Endothelial cell of umbilical vein (primary cell): ENCODE measurements at regions of chr4 and their contacts with region 1.

Region 1: GRCh38 chr4:77007358-77008191 is 58.0 kb downstream of the SEPTIN11 start:
- DNase-seq: peak; percentile 95
- H3K4me3 ChIP-seq: peak overlapping the region in 1 of 3 experiments; percentile 28
- H3K27ac ChIP-seq: peak overlapping the region; percentile 100
- H3K4me1 ChIP-seq: peaks cover 91% of the 10 kb centered on the region
- H3K27me3 ChIP-seq: no peaks in the 10 kb centered on the region
- CTCF ChIP-seq: no peak
- POLR2A ChIP-seq: peak; percentile 54

Region 2: DNA sequence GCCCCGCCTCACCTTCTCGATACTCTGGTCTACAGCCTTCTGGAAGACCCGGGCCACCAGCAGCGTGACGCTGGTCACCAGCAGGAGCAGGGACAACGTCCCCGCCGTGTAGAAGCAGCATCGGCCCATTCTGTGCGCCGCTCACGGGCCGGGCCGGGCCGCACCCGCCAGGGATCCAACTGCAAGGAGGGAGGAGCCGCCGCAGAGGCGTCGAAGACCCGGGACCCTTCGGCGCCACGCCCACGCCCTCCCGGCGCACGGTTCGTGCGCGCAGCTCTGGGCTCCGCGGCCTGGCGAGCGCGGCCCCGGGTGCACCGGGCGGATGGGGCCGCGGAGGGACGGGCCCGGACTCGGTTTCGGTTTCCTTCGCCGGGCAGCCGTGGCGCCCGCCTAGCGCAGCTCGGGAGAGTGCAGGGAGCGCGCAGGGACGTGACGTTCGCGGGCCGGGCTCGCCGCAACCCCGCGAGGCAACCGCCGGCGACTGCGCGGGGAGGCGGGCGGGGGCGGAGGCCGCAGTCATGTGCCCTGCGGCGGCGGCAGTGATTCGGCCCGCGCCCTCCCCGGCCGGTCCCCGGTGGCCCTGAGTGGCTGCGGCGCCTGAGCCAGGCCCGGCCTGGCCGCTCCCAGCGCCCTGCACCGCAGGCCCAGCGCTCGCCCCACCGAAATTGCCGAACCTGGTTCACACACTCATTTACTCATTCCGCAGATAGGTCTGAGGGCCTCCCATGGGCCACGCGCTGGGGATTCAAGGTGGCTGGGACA is 794.0 kb before region 1 on chr4 and contains the start of gene SCARB2:
- CTCF ChIA-PET with region 1: no interaction called
- POLR2A ChIA-PET with region 1: no interaction called
- dilution Hi-C with region 1: no loop called
- intact Hi-C with region 1: loop called (anchors 5 kb)
- DNase-seq: peak; percentile 90
- H3K4me3 ChIP-seq: peak within 1 kb of the TSS; percentile 37 to 94 (median 85)
- H3K27ac ChIP-seq: peak within 1 kb of the TSS; percentile 57
- H3K4me1 ChIP-seq: peaks cover 36% of the 10 kb centered on the region
- H3K27me3 ChIP-seq: no peaks in the 10 kb centered on the region
- CTCF ChIP-seq: no peak
- POLR2A ChIP-seq: peak; percentile 93
- total RNA-seq, gene SCARB2: 116 and 122 TPM in 2 replicates

Region 3: DNA sequence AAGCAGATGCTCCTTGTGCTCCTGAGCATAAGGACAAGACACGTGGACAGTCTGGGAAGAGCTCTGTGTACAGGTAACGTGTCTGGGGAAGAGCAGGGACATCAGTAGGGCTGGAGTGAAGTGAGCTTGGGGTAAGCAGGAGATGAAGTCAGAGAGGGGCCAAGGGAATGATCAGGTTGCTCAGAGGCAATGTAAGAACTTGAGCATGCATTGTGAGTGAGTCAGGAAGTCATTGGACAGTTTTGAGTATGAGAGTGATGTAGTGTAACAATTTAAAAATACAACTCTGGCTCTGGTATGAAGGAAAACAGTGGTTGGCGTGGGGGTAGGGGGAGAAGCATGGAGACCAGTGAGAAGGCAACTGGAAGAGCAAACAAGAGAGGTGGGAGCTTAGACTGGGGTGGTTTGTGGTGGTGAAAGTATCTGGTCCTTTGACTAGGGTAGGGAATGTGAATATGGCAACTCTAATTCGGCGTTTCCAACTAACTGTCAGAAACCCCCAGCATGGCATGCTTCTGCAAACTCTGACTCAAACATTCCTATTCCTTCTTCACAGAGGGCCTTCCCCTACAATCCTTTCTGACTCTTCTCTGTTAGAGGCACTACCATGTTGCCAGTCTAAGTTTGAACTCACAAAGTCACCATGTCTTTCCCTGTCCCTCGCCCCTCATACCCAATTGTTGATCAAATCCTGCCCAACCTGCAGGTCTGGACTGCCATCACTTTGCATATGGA is 643.9 kb before region 1 on chr4:
- CTCF ChIA-PET with region 1: no interaction called
- POLR2A ChIA-PET with region 1: no interaction called
- dilution Hi-C with region 1: no loop called
- intact Hi-C with region 1: no loop called
- DNase-seq: no peak
- H3K4me3 ChIP-seq: no peak overlapping the region
- H3K27ac ChIP-seq: no peak overlapping the region
- H3K4me1 ChIP-seq: no peaks in the 10 kb centered on the region
- H3K27me3 ChIP-seq: peaks cover 26 to 29% of the 10 kb centered on the region in 2 experiments
- CTCF ChIP-seq: no peak
- POLR2A ChIP-seq: no peak

Region 4: GRCh38 chr4:76748649-76749048 is 258.9 kb before region 1 on chr4:
- CTCF ChIA-PET with region 1: no interaction called
- POLR2A ChIA-PET with region 1: no interaction called
- dilution Hi-C with region 1: no loop called
- intact Hi-C with region 1: loop called (anchors 1 kb)
- DNase-seq: peak; percentile 57
- H3K4me3 ChIP-seq: no peak overlapping the region
- H3K27ac ChIP-seq: no peak overlapping the region
- H3K4me1 ChIP-seq: peaks cover 24% of the 10 kb centered on the region
- H3K27me3 ChIP-seq: no peaks in the 10 kb centered on the region
- CTCF ChIP-seq: peak; percentile 28 to 35
- POLR2A ChIP-seq: no peak

Region 5: GRCh38 chr4:76984127-76984526 is 23.4 kb before region 1 on chr4:
- CTCF ChIA-PET with region 1: interaction called, 5 read pairs
- POLR2A ChIA-PET with region 1: no interaction called
- dilution Hi-C with region 1: no loop called
- intact Hi-C with region 1: loop called (anchors 1 kb)
- DNase-seq: peak; percentile 84
- H3K4me3 ChIP-seq: peak overlapping the region in 1 of 3 experiments; percentile 1
- H3K27ac ChIP-seq: peak overlapping the region; percentile 65
- H3K4me1 ChIP-seq: peaks cover 41% of the 10 kb centered on the region
- H3K27me3 ChIP-seq: no peaks in the 10 kb centered on the region
- CTCF ChIP-seq: peak; percentile 46 to 51
- POLR2A ChIP-seq: no peak

Region 6: GRCh38 chr4:77044461-77045150 is 37.0 kb after region 1 on chr4:
- CTCF ChIA-PET with region 1: interaction called, 8 read pairs
- POLR2A ChIA-PET with region 1: no interaction called
- dilution Hi-C with region 1: no loop called
- intact Hi-C with region 1: loop called (anchors 2 kb)
- DNase-seq: peak; percentile 67
- H3K4me3 ChIP-seq: no peak overlapping the region
- H3K27ac ChIP-seq: no peak overlapping the region
- H3K4me1 ChIP-seq: peaks cover 7% of the 10 kb centered on the region
- H3K27me3 ChIP-seq: no peaks in the 10 kb centered on the region
- CTCF ChIP-seq: peak; percentile 37 to 46
- POLR2A ChIP-seq: no peak

Region 7: DNA sequence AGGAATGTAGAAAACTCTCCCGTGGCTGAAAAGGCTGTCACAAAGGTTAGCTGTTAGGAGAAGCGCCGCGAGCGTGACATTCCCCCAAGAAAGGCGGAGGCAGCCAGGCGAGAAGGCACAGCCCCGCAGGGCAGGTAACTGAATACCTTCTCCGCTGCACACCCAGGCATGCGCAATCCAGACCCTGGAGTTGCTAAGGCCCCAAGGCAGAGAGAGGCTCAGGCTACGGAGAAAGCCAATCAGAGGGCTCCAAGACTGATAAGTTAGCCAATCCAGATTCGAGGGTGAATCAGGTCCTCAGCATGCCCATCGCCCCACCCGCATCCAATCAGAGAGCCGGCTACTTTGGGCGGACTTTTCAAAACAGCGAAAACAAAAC is 148.9 kb after region 1 on chr4:
- CTCF ChIA-PET with region 1: no interaction called
- POLR2A ChIA-PET with region 1: no interaction called
- dilution Hi-C with region 1: no loop called
- intact Hi-C with region 1: loop called (anchors 1 kb)
- DNase-seq: peak; percentile 99
- H3K4me3 ChIP-seq: peak overlapping the region; percentile 75 to 98 (median 80)
- H3K27ac ChIP-seq: peak overlapping the region; percentile 86
- H3K4me1 ChIP-seq: peaks cover 15% of the 10 kb centered on the region
- H3K27me3 ChIP-seq: peaks cover 19 to 22% of the 10 kb centered on the region in 2 experiments
- CTCF ChIP-seq: no peak
- POLR2A ChIP-seq: peak; percentile 57